ENCODE measurements at regions of chr22 and their contacts with region 1.

Region 1: DNA sequence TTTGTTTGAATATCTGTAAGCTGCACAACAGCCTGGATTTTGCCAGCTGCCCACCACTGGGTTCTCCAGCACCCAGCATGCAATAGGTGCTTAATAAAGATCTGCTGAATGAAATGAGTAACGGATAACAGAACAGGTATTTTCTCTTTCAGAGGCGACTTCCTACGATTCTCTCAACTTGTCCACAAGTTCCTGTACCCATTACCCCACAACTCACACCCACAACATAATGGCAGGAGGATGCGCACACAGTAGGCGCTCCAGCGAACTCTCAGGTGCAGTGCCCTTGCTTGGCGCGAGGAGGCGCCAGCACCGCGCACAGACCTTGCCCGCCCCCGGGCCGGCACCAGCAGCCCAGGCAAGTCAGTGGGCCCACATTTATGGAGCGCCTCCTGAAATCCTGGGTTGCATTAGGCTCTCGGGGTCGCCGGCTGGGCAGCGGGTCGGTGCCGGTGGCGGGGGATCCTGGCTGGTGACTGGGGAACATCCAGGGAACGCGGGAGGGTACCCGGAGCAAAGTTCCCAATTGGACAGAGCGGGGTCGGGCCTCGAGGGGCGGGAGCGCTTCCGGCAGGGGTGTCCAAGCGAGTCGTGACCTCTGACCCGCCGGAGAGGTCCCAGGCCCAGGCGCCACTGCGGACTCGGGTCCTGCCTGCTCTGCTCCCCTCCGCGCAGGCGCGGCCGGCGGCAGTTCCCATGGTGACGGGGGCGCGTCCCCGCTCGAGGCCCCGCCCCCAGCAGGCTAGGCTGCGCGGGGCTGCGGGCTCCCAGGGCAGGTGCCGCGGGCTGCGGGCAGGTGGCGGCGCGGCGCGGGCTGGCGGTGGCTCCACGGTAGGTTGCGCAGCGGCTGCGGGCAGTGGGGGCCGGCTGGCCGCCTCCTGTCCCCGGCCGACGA is at the start of gene KIAA1671:
- DNase-seq: peak; percentile 78 to 88
- H3K4me3 ChIP-seq: peak within 1 kb of the TSS; percentile 63 to 73
- H3K27ac ChIP-seq: peak within 1 kb of the TSS; percentile 64 to 71
- H3K4me1 ChIP-seq: peaks cover 0 to 44% (median 16%) of the 10 kb centered on the region in 4 donors
- H3K27me3 ChIP-seq: peaks cover 0 to 11% of the 10 kb centered on the region in 2 donors
- CTCF ChIP-seq: peak; percentile 96 to 98

Region 2: GRCh38 chr22:24855794-24856193 is 96.4 kb before region 1 on chr22:
- intact Hi-C with region 1: no loop called
- DNase-seq: no peak
- H3K4me3 ChIP-seq: no peak overlapping the region
- H3K27ac ChIP-seq: no peak overlapping the region
- H3K4me1 ChIP-seq: no peaks in the 10 kb centered on the region
- H3K27me3 ChIP-seq: no peaks in the 10 kb centered on the region
- CTCF ChIP-seq: no peak

Region 3: DNA sequence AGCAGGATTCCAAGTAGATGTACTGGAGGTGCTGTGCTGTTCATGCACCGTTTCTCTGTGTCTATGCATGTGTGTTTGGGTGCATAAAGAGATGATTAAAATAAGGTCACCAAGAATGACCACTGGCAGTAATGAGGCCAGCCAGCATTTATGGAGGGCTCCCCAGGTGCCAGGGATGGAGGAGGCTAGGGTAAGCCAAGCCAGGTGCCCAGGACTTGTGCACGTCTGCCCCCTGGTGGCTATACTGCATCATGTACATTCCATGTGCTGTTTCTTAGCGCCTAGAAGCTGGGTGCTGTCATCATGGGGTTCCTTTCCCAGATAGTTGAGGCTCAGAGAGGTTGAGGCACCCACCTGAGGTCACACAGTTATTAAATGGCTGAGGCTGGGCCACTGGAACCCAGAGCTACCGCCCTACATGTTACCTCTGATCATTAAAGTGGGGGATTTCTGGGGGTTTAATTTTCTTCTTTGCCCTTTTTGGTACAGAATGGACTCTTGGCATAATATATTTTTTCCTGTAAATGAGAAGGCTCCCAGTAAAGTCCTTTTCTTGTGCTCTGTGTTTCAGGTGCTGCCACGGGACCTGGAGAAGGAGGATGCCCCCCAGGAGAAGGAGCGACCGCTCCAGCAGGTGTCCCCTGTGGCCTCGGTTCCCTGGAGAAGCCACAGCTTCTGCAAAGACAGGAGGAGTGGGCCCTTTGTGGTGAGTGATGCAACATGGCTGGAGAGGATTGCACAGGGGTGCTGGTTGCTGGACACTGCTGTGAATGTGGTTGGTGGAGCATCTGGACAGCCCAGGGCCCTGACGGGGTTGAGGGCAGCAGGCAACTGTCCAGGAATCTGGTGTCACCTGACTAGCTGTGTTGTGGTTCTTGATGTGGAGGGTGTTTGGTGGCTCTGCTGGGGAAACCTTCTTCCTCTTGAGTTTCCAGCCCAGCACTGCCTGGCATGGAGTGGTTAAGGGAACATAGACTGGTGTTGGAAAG is 96.8 kb after region 1 on chr22:
- intact Hi-C with region 1: loop called (anchors 2 kb)
- DNase-seq: peak in 1 of 2 donors; percentile 51
- H3K4me3 ChIP-seq: no peak overlapping the region
- H3K27ac ChIP-seq: no peak overlapping the region
- H3K4me1 ChIP-seq: peaks cover 0 to 4% (median 0%) of the 10 kb centered on the region in 4 donors
- H3K27me3 ChIP-seq: no peaks in the 10 kb centered on the region
- CTCF ChIP-seq: peak; percentile 87 to 90

Measured in tibial artery (tissue), 4 donors.